ENCODE measurements at regions of chr1 and their contacts with region 1.

Region 1: DNA sequence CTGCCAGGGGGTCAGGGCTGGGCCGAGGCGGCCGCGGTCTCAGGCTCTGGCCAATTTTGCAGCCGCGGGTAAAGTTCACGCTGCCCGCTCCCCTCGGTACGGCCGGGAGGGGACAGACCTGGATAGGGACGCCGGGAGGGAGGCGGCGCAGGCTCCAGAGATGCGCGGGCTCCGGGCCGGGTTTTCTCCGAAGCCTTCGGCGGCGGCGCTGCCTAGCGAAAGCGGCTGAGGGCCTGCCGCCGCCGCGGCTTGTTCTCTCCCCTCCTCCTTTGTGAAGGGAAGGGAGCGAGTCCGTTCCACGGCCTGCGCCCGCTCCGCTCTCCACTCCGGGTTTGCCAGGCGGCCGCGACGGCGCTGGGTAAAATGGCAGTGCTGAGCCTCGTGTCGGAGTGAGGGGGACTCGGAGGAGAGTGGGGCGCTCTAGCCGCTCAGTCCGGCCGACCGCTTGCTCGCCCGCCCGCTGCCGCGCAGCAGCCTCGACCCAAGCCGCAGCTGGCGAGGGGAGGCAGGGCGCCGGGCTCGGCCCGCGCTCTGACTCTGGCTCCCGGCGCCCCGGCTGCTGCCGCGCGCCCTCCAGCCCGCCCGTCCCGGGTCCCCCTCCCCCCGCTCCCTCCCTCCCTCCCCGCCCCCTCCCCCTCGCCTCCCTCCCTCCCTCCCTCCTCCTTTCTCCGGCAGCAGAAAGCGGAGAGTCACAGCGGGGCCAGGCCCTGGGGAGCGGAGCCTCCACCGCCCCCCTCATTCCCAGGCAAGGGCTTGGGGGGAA is at the start of gene ARID1A:
- DNase-seq: peak; percentile 99
- H3K4me3 Mint-ChIP-seq: peak within 1 kb of the TSS; percentile 94
- H3K27ac Mint-ChIP-seq: peak within 1 kb of the TSS; percentile 99
- H3K4me1 Mint-ChIP-seq: peaks cover 35% of the 10 kb centered on the region
- H3K27me3 Mint-ChIP-seq: no peaks in the 10 kb centered on the region
- total RNA-seq, gene ARID1A: 111 and 117 TPM in 2 replicates

Region 2: GRCh38 chr1:26541816-26542711 is 153.5 kb before region 1 on chr1:
- intact Hi-C with region 1: loop called (anchors 2 kb)
- DNase-seq: peak; percentile 93
- H3K4me3 Mint-ChIP-seq: peak overlapping the region; percentile 83
- H3K27ac Mint-ChIP-seq: peak overlapping the region; percentile 91
- H3K4me1 Mint-ChIP-seq: peaks cover 78% of the 10 kb centered on the region
- H3K27me3 Mint-ChIP-seq: no peaks in the 10 kb centered on the region

Region 3: GRCh38 chr1:26602378-26602959 is 93.1 kb before region 1 on chr1:
- intact Hi-C with region 1: loop called (anchors 5 kb)
- DNase-seq: peak; percentile 89
- H3K4me3 Mint-ChIP-seq: no peak overlapping the region
- H3K27ac Mint-ChIP-seq: no peak overlapping the region
- H3K4me1 Mint-ChIP-seq: peaks cover 9% of the 10 kb centered on the region
- H3K27me3 Mint-ChIP-seq: peaks cover 3% of the 10 kb centered on the region

Region 4: DNA sequence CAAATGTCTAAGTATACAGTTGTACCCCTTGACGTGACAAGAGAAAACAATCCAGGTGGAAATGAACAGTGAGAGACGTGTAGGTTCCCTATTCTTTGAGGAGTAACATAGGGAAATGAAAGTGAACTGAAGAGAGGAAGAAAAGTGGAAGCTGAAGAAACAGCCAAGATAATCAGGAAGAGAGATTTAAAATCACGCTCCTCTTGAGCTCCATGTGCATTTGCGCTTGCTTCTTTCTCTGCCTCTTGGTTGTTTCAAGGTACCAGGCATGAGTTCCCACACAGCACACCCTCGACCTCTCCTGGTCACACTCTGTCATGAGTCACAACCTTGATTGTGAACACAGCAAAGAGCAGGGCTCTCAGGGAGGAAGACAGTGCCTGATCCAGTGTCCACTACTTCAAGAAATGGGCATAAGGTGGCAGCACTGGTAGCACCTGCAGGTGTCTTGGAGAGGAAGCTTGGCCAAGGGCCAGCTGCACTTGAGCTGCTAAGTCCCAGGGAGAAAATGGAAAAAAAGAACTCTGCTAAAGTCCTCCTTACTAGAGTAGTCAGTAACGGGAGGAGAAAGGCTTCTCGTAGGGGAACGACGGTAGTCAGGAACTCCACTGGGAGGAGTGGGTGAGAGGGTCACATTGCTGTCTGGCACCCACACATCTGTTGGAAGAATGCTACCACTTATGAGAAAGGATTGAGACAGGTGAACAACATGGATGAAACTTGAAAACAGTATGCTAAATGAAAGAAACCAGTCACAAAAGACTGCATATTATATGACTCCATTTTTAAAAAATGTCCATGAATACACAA is 18.0 kb before region 1 on chr1:
- intact Hi-C with region 1: no loop called
- DNase-seq: peak; percentile 84
- H3K4me3 Mint-ChIP-seq: peak overlapping the region; percentile 2
- H3K27ac Mint-ChIP-seq: no peak overlapping the region
- H3K4me1 Mint-ChIP-seq: peaks cover 15% of the 10 kb centered on the region
- H3K27me3 Mint-ChIP-seq: peaks cover 2% of the 10 kb centered on the region

Region 5: DNA sequence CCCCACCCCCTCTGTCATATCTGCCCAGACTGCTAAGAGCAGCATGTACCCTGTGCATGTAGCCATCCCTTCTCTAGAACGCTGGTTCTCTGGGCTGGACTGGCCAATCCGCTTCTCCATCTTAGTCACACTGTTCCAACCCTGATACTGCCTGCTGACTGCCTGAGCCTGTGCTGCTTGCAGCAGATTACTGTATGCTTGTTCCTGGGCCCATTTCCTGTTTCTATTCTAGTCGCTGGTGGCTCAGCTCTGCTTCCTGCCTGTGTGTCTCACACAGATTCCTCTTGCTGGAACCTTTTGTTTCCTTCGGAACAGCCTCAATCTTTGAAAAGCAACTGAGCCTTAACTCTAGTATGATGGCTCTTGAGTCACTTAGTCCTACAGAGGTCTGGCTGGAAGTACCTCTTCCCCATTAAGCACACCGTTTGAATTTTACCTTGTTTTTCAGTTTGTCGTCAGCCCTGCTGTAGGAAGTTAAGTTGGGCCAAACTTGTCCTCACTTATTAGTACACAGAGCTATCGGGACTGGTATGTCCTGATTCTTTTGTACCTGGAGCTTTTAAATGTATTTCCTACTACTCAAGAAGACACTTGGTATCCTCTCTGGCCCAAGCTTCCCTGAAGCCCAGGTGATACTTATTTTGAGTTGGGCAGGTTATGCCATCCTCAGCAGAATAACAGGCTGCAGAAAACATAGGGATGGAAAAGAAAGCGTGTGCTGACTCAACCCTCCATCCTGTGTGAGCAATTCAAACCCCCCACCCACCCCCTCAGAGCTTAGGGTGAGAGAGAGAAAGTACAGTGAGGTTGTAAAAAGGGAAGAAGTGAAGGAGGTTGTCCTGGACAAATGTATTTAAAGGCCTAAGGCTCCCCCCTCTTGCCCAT is 48.8 kb after region 1 on chr1:
- intact Hi-C with region 1: loop called (anchors 1 kb)
- DNase-seq: peak; percentile 95
- H3K4me3 Mint-ChIP-seq: peak overlapping the region; percentile 72
- H3K27ac Mint-ChIP-seq: peak overlapping the region; percentile 89
- H3K4me1 Mint-ChIP-seq: peaks cover 75% of the 10 kb centered on the region
- H3K27me3 Mint-ChIP-seq: no peaks in the 10 kb centered on the region

Region 6: GRCh38 chr1:26833432-26834405 is 138.2 kb after region 1 on chr1:
- intact Hi-C with region 1: loop called (anchors 2 kb)
- DNase-seq: peak; percentile 97
- H3K4me3 Mint-ChIP-seq: peak overlapping the region; percentile 70
- H3K27ac Mint-ChIP-seq: peak overlapping the region; percentile 92
- H3K4me1 Mint-ChIP-seq: peaks cover 66% of the 10 kb centered on the region
- H3K27me3 Mint-ChIP-seq: no peaks in the 10 kb centered on the region

Measured in activated CD4-positive, alpha-beta T cell treated with anti-CD3 and anti-CD28 coated beads, Interleukin-2, amount 10 ng/mL, durations not matched to agents 24 days and 14 days (primary cell).